ENCODE measurements at regions of chr6 and their contacts with region 1.

Region 1: GRCh38 chr6:8131256-8131897 is 29.0 kb upstream of the EEF1E1 start:
- DNase-seq: peak; percentile 87
- ATAC-seq: peak; percentile 99
- H3K4me3 ChIP-seq: no peak overlapping the region
- H3K27ac ChIP-seq: no peak overlapping the region
- H3K4me1 ChIP-seq: no peaks in the 10 kb centered on the region
- H3K27me3 ChIP-seq: peaks cover 57% of the 10 kb centered on the region
- CTCF ChIP-seq: peak; percentile 88

Region 2: GRCh38 chr6:8219352-8219943 is 88.1 kb after region 1 on chr6:
- CTCF ChIA-PET with region 1: interaction called, 61 read pairs
- POLR2A ChIA-PET with region 1: no interaction called
- intact Hi-C with region 1: loop called (anchors 1 kb)
- DNase-seq: peak; percentile 69
- ATAC-seq: peak; percentile 78
- H3K4me3 ChIP-seq: peak overlapping the region; percentile 37; the same call in 1 of the 2 replicates
- H3K27ac ChIP-seq: no peak overlapping the region
- H3K4me1 ChIP-seq: no peaks in the 10 kb centered on the region
- H3K27me3 ChIP-seq: peaks cover 31% of the 10 kb centered on the region
- CTCF ChIP-seq: peak; percentile 81

Region 3: DNA sequence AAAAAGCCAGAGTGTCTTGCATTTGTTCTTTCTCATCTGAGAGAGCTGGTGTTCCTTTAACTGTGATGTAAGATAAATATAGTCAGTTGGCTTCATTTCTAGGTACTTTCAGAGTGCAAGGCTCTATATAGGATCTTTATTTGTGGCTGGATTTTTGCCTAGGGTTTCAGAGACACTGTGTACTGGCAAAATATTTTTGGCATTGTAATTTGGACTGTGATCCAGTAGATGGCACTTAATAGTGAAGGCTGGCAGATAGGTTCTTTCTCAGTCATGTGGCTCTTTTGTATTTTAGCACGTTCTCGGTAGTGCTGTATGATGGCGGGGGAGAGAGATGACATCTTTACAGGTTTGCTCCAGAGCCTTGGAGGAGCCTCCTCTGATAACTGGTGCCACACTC is 330.8 kb after region 1 on chr6:
- CTCF ChIA-PET with region 1: no interaction called
- POLR2A ChIA-PET with region 1: interaction called, 26 read pairs
- intact Hi-C with region 1: no loop called
- DNase-seq: peak; percentile 49
- ATAC-seq: peak; percentile 51
- H3K4me3 ChIP-seq: no peak overlapping the region
- H3K27ac ChIP-seq: no peak overlapping the region
- H3K4me1 ChIP-seq: no peaks in the 10 kb centered on the region
- H3K27me3 ChIP-seq: no peaks in the 10 kb centered on the region
- CTCF ChIP-seq: peak; percentile 59